Activated CD4-positive, alpha-beta T cell treated with anti-CD3 and anti-CD28 coated beads for 36 hours (primary cell): ENCODE measurements at regions of chr9 and their contacts with region 1.

Region 1: GRCh38 chr9:69421908-69422801 is 97.1 kb downstream of the ENTREP1 start:
- DNase-seq: peak; percentile 65
- ATAC-seq: peak; percentile 50
- H3K4me3 Mint-ChIP-seq: no peak overlapping the region
- H3K27ac Mint-ChIP-seq: no peak overlapping the region
- H3K4me1 Mint-ChIP-seq: no peaks in the 10 kb centered on the region
- H3K27me3 Mint-ChIP-seq: peaks cover 17% of the 10 kb centered on the region

Region 2: DNA sequence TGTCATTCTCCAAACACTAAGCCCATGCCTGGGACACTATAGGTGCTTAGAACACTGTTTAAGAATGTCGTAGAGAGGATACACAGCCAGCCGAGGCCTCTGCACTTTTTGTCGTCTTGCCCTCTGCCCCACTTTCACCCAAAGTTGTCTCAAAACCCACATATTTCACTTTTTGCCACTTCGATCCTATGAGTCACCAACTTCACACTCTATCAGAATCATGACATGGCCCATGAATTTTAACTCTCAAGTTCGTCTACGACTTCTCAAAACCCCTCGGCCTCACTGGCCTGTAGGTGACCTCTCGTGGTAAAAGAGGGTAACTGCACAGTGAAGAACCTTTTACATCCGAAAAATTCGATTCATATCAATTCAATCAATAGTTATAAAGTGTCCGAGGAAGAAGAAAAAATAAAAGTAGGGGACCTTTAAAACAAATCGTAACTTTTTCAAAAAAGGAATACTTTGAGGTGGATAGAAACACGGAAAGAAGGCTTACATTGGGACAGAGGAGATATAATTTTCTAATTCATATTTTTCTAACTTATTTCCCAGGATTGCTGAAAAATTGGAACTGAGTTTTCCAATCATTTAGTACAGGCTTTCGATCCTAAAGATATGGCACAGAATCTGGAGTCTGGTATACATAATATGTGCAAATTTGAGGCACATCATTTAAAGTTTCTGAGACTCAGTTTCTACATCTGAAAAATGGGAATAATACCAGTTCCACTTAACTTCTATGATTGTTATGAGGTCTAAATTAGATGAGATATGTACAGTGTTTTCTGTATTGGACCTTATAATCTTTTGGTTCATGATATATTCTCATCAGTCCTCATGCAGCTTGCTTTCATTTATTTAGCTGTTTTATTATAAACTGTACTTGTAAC is 127.4 kb after region 1 on chr9:
- CTCF ChIA-PET with region 1: interaction called, 29 read pairs
- POLR2A ChIA-PET with region 1: no interaction called
- intact Hi-C with region 1: loop called (anchors 1 kb)
- DNase-seq: peak; percentile 52
- ATAC-seq: peak; percentile 80
- H3K4me3 Mint-ChIP-seq: no peak overlapping the region
- H3K27ac Mint-ChIP-seq: no peak overlapping the region
- H3K4me1 Mint-ChIP-seq: peaks cover 5% of the 10 kb centered on the region
- H3K27me3 Mint-ChIP-seq: peaks cover 13% of the 10 kb centered on the region